Activated CD4-positive, alpha-beta memory T cell treated with anti-CD3 and anti-CD28 coated beads for 36 hours (primary cell): ENCODE measurements at regions of chr4 and their contacts with region 1.

Region 1: GRCh38 chr4:145234091-145234706 is 53.8 kb upstream of the OTUD4 start:
- DNase-seq: peak; percentile 65
- H3K4me3 Mint-ChIP-seq: no peak overlapping the region
- H3K27ac Mint-ChIP-seq: no peak overlapping the region
- H3K4me1 Mint-ChIP-seq: no peaks in the 10 kb centered on the region
- H3K27me3 Mint-ChIP-seq: no peaks in the 10 kb centered on the region

Region 2: GRCh38 chr4:145388043-145388442 is 153.8 kb after region 1 on chr4:
- CTCF ChIA-PET with region 1: no interaction called
- POLR2A ChIA-PET with region 1: no interaction called
- intact Hi-C with region 1: no loop called
- DNase-seq: no peak
- H3K4me3 Mint-ChIP-seq: no peak overlapping the region
- H3K27ac Mint-ChIP-seq: no peak overlapping the region
- H3K4me1 Mint-ChIP-seq: no peaks in the 10 kb centered on the region
- H3K27me3 Mint-ChIP-seq: peaks cover 15% of the 10 kb centered on the region

Region 3: DNA sequence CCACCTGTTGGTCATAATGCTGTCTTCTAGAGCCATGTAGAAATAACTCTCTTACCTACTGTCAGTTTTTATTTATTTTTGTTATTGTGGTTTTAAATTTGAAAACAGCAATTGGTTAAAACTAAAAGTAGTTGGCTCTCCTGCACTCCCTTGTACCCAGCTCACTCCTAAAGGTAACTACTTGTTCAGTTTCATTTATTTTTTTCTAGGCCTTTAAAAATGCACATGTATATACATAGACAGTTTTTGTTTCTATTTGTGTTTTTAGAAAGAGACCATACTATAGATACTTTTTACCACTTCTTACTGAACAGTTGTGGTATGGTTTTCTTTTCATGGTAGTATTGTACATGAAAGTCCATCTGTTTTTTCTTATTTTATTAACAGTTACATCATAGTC is 264.2 kb after region 1 on chr4:
- CTCF ChIA-PET with region 1: interaction called, 4 read pairs
- POLR2A ChIA-PET with region 1: no interaction called
- intact Hi-C with region 1: loop called (anchors 5 kb)
- DNase-seq: no peak
- H3K4me3 Mint-ChIP-seq: no peak overlapping the region
- H3K27ac Mint-ChIP-seq: no peak overlapping the region
- H3K4me1 Mint-ChIP-seq: no peaks in the 10 kb centered on the region
- H3K27me3 Mint-ChIP-seq: peaks cover 8% of the 10 kb centered on the region

Region 4: GRCh38 chr4:145557720-145558119 is 323.5 kb after region 1 on chr4:
- CTCF ChIA-PET with region 1: interaction called, 52 read pairs
- POLR2A ChIA-PET with region 1: no interaction called
- intact Hi-C with region 1: loop called (anchors 1 kb)
- DNase-seq: peak; percentile 70
- H3K4me3 Mint-ChIP-seq: no peak overlapping the region
- H3K27ac Mint-ChIP-seq: no peak overlapping the region
- H3K4me1 Mint-ChIP-seq: peaks cover under 1% of the 10 kb centered on the region
- H3K27me3 Mint-ChIP-seq: peaks cover 8% of the 10 kb centered on the region